Prostate gland (tissue), 2 donors: ENCODE measurements at regions of chr13 and their contacts with region 1.

Region 1: GRCh38 chr13:41960639-41961465 is at the start of gene VWA8:
- DNase-seq: peak; percentile 60
- H3K4me3 ChIP-seq: peak within 1 kb of the TSS; percentile 54 to 59
- H3K27ac ChIP-seq: peak within 1 kb of the TSS; percentile 77 to 82
- H3K4me1 ChIP-seq: peaks cover 4% of the 10 kb centered on the region
- H3K27me3 ChIP-seq: no peaks in the 10 kb centered on the region
- CTCF ChIP-seq: no peak
- POLR2A ChIP-seq: no peak
- total RNA-seq, gene VWA8: 18.1 to 21.8 TPM

Region 2: DNA sequence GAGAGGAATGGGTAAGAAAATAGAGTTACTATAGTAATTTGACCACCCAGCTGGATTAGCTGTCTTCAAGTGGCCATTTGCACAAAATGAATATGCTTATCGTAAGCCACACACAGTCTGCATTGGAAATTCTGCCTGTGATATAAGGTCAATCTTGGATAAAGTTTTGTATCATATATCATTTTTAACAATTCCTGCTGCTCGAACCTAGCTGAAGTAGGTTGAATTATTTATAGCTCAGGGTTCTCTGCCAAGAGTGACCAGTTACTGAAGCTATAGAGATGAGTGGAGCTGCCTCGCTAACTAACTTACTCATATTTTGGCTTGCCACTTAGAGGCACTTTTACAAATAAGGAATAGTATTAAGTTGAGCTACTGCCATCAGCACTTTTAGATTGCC is 282.6 kb before region 1 on chr13:
- intact Hi-C with region 1: loop called (anchors 10 kb)
- DNase-seq: no peak
- H3K4me3 ChIP-seq: no peak overlapping the region
- H3K27ac ChIP-seq: no peak overlapping the region
- H3K4me1 ChIP-seq: no peaks in the 10 kb centered on the region
- H3K27me3 ChIP-seq: no peaks in the 10 kb centered on the region
- CTCF ChIP-seq: no peak
- POLR2A ChIP-seq: no peak

Region 3: DNA sequence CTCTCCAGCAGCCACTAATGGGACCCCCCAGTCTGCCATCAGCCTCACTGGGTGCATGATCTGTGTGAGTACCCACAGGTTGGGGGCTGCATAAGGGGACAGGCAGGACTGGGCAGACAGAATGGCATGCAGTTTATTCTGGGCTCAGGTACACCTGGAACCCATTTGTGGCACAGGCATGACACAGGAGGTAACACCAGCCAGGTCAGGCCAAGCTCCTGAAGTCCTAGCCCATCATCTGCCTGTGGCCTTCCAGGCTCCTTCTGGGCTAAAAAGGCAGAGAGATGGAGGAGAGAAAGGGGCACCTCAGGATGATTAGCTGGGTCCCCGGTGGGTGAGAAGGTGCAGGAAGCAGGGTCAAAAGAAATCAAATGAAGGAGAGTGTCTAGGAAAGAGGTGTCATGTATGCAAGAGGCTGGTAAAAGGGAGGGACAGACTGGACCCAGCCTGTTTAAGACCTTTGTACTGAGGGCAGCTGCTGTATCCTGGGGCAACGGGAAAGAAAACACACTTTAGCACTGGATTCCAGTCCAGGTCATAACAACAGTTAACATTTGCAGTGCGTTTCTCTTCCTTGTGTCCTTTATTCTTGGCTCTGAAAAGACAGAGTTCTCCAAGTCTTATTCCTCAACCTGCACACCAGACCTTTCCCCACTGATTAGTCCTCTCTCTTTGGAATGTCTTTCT is 67.4 kb after region 1 on chr13:
- intact Hi-C with region 1: no loop called
- DNase-seq: no peak
- H3K4me3 ChIP-seq: no peak overlapping the region
- H3K27ac ChIP-seq: no peak overlapping the region
- H3K4me1 ChIP-seq: no peaks in the 10 kb centered on the region
- H3K27me3 ChIP-seq: no peaks in the 10 kb centered on the region
- CTCF ChIP-seq: no peak
- POLR2A ChIP-seq: no peak

Region 4: DNA sequence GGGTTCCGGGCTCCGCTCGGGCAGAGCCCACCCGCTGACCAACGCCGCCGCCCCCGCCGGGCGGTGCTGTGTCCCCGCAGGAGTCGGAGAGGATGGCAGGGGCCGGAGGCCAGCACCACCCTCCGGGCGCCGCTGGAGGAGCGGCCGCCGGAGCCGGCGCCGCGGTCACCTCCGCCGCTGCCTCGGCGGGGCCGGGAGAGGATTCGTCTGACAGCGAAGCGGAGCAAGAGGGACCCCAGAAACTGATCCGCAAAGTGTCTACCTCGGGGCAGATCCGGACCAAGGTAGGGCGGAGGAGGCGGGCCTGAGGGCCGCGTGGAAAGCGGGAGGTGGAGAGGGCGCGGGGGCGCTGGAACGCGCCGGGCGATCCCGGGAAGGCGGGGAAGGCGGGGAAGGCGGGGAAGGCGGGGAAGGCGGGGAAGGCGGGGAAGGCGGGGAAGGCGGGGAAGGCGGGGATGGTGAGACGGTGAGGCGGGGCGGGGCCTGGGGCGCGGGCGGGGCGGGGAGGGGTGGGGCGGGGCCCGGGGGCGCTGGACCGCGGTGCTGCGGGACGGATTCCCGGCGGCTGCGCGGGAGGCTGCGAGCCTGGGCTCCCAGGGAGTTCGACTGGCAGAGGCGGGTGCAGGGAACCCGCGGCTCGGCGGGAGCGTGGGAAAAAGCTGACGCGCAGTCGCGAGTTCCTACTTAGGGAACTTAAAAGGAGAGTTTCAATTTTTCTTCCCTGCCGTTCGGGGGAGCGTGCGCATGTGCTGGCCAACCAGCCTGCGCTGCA is 88.0 kb after region 1 on chr13:
- intact Hi-C with region 1: loop called (anchors 5 kb)
- DNase-seq: peak; percentile 83
- H3K4me3 ChIP-seq: peak overlapping the region; percentile 73 to 91
- H3K27ac ChIP-seq: peak overlapping the region; percentile 89
- H3K4me1 ChIP-seq: no peaks in the 10 kb centered on the region
- H3K27me3 ChIP-seq: no peaks in the 10 kb centered on the region
- CTCF ChIP-seq: peak in 1 of 4 experiments; percentile 29
- POLR2A ChIP-seq: peak; percentile 81